T-cell (primary cell): ENCODE measurements at regions of chr17 and their contacts with region 1.

Region 1: DNA sequence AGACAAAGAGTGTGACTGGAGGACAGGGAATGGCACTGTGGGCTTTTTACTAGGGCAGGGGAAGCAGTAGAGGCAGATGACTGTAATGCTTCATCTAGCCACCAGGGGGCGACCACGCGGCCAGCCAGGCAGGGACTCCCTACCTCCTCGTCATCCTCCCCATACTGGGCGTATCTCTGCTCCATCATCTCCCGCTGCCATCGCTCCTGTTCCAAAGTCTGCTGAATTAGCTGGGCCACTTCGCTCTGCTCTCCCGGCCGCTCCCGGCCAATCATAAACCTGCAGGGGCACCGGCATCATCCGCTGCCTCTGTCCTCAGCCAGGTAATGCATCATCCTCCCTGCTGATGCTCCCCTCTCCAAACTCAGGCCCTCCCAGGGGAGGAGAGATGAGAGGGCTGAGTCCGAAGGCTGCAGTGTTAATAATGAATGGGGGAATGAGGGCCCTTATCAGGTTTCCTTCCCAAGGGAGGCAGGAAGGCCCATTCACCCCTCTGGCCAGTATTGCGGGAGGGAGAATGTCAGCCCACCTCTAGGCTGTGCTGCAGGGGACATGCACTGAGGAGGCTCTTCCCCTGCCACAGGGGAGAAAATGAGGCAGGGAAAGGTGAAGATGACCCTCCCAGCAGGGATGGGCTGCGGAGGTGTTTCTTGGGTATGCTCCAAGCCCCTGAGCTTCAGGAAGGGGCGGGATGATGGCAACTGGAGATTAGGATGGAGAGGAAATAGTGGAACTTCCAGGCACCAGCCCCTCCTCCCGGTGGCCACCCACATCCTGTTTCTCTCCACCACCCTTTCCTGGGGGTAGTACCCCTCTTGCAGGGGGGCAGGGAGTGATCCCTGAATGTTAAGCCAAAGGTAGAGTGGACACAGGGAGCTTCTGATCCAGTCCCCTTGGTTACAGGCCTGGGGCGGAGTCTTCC is 10.3 kb upstream of the SAMD14 start:
- DNase-seq: peak in 34 of 35 experiments; percentile 60 to 87 (median 74)
- ATAC-seq: peak; percentile 75 to 86 (median 82)
- H3K4me3 ChIP-seq: no peak overlapping the region
- H3K4me3 Mint-ChIP-seq: peak overlapping the region; percentile 54 to 73 (median 55)
- H3K27ac ChIP-seq: peak overlapping the region; percentile 40
- H3K27ac Mint-ChIP-seq: peak overlapping the region; percentile 92 to 97
- H3K4me1 ChIP-seq: peaks cover 11 to 62% of the 10 kb centered on the region in 2 experiments
- H3K4me1 Mint-ChIP-seq: peaks cover 63 to 70% (median 68%) of the 10 kb centered on the region in 3 donors
- H3K27me3 ChIP-seq: no peaks in the 10 kb centered on the region
- H3K27me3 Mint-ChIP-seq: no peaks in the 10 kb centered on the region

Region 2: GRCh38 chr17:50026901-50027630 is 113.1 kb before region 1 on chr17:
- CTCF ChIA-PET with region 1: no interaction called
- POLR2A ChIA-PET with region 1: no interaction called
- DNase-seq: peak; percentile 23 to 86 (median 64)
- ATAC-seq: peak; percentile 73 to 81 (median 78)
- H3K4me3 ChIP-seq: peak overlapping the region in 1 of 2 donors; percentile 23
- H3K4me3 Mint-ChIP-seq: peak overlapping the region in 2 of 3 donors; percentile 5 to 53
- H3K27ac ChIP-seq: no peak overlapping the region
- H3K27ac Mint-ChIP-seq: peak overlapping the region in 1 of 2 donors; percentile 16
- H3K4me1 ChIP-seq: peaks cover 0 to 11% of the 10 kb centered on the region in 2 experiments
- H3K4me1 Mint-ChIP-seq: peaks cover 11 to 17% (median 16%) of the 10 kb centered on the region in 3 donors
- H3K27me3 ChIP-seq: peaks cover 0 to 40% of the 10 kb centered on the region in 2 experiments
- H3K27me3 Mint-ChIP-seq: peaks cover 22 to 24% of the 10 kb centered on the region in 2 donors

Region 3: GRCh38 chr17:50151041-50151936 is 11.1 kb after region 1 on chr17:
- CTCF ChIA-PET with region 1: interaction called, 4 to 11 read pairs
- POLR2A ChIA-PET with region 1: no interaction called
- DNase-seq: peak; percentile 64 to 89 (median 79)
- ATAC-seq: peak; percentile 66 to 74 (median 68)
- H3K4me3 ChIP-seq: peak overlapping the region; percentile 62 to 82
- H3K4me3 Mint-ChIP-seq: peak overlapping the region; percentile 82 to 96 (median 87)
- H3K27ac ChIP-seq: peak overlapping the region; percentile 67
- H3K27ac Mint-ChIP-seq: peak overlapping the region; percentile 88 to 94
- H3K4me1 ChIP-seq: peaks cover 22 to 53% of the 10 kb centered on the region in 2 experiments
- H3K4me1 Mint-ChIP-seq: peaks cover 37 to 46% (median 44%) of the 10 kb centered on the region in 3 donors
- H3K27me3 ChIP-seq: no peaks in the 10 kb centered on the region
- H3K27me3 Mint-ChIP-seq: no peaks in the 10 kb centered on the region

Region 4: DNA sequence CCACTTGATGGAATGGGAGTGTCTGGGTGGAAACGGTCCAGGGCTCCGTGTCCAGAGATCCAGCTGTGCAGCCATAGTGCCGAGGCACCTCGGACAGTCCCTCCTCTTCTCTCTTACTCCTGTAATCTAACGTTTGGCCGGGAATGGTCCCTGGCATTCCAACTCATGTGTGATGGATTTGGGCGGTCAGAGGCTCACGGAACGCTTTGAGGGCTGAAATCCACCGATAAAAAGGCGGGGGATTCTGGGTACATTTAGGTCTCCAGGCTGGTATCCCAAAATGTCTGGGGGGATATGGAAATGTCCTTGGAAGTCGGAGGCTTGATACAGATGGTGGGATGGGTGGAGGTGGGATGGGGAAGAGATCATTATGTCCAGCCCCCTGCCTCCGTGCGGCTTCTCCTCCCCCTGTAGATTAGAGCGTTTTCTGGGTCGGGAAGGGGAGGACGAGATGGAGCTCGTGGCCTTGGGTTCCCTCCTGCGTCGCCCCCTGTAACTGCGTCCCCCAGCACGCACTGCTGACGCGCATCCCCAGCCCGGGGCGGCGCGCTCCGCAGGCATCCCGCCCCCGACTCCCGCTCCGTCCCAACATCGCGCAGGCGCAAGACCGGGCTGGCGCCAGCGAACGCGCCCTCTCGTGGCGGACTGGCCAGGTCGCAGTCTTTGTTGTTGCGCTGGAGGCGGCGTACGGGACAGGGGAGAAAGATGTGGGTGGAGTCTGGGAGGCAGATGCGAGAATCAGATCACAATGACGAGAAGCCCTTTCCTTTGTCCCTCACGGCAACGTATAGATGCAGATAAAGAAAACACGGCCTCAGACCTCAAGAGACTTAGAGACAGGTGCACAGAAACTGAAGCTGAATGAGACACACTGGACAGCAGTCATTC is 21.1 kb after region 1 on chr17:
- CTCF ChIA-PET with region 1: interaction called, 7 to 11 read pairs
- POLR2A ChIA-PET with region 1: no interaction called
- DNase-seq: peak; percentile 85 to 97 (median 91)
- ATAC-seq: peak; percentile 89 to 97 (median 96)
- H3K4me3 ChIP-seq: peak overlapping the region; percentile 60 to 71
- H3K4me3 Mint-ChIP-seq: peak overlapping the region; percentile 72 to 79 (median 77)
- H3K27ac ChIP-seq: peak overlapping the region; percentile 49
- H3K27ac Mint-ChIP-seq: peak overlapping the region; percentile 40 to 85
- H3K4me1 ChIP-seq: peaks cover 14 to 27% of the 10 kb centered on the region in 2 experiments
- H3K4me1 Mint-ChIP-seq: peaks cover 28 to 40% (median 38%) of the 10 kb centered on the region in 3 donors
- H3K27me3 ChIP-seq: no peaks in the 10 kb centered on the region
- H3K27me3 Mint-ChIP-seq: no peaks in the 10 kb centered on the region